A549 (cell line): ENCODE measurements at regions of chr1 and their contacts with region 1.

Region 1: GRCh38 chr1:178310685-178311105 is 186.1 kb downstream of the CLEC20A start:
- DNase-seq: peak; percentile 64 to 76
- ATAC-seq: peak; percentile 89 to 91
- H3K4me3 ChIP-seq: no peak overlapping the region
- H3K27ac ChIP-seq: no peak overlapping the region
- H3K4me1 ChIP-seq: 0 out of 3 replicates have a peak, but pooled peaks cover 7% of the 10 kb centered on the region
- CTCF ChIP-seq: peak; percentile 86
- EP300 ChIP-seq: no peak
- POLR2A ChIP-seq: no peak
- RAD21 ChIP-seq: peak; percentile 83 to 89

Region 2: DNA sequence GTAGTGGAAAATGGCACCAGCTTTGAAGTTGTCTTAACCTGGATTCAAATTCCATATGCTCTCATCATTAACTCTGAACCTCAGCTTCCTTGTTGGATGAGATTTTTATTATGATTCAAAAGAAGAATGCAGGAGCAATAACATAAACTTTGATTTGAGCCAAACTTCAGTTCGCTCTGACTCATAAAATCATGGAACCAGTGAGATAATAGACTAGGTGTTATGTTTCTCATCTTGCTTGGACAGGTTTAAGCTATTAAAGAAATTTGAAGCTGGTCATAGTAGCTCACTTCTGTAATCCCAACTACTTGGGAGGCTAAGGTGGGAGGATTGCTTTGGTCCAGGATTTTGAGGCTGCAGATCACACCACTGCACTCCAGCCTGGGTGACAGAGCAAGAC is 13.3 kb after region 1 on chr1:
- CTCF ChIA-PET with region 1: interaction called, 11 read pairs
- POLR2A ChIA-PET with region 1: no interaction called
- DNase-seq: no peak
- ATAC-seq: no peak
- H3K4me3 ChIP-seq: no peak overlapping the region
- H3K27ac ChIP-seq: no peak overlapping the region
- H3K4me1 ChIP-seq: peaks cover 7% of the 10 kb centered on the region; the same call in 2 of the 3 replicates
- CTCF ChIP-seq: no peak
- EP300 ChIP-seq: no peak
- POLR2A ChIP-seq: no peak
- RAD21 ChIP-seq: no peak

Region 3: GRCh38 chr1:178417858-178418257 is 107.2 kb after region 1 on chr1:
- CTCF ChIA-PET with region 1: no interaction called
- POLR2A ChIA-PET with region 1: no interaction called
- DNase-seq: peak; percentile 44 to 70
- ATAC-seq: peak; percentile 50 to 76; a peak in 5 of 6 replicates
- H3K4me3 ChIP-seq: no peak overlapping the region
- H3K27ac ChIP-seq: peak overlapping the region in 1 of 2 experiments; percentile 21; a peak in 2 of 6 replicates
- H3K4me1 ChIP-seq: peaks cover 15% of the 10 kb centered on the region
- CTCF ChIP-seq: no peak
- EP300 ChIP-seq: no peak
- POLR2A ChIP-seq: no peak
- RAD21 ChIP-seq: no peak

Region 4: DNA sequence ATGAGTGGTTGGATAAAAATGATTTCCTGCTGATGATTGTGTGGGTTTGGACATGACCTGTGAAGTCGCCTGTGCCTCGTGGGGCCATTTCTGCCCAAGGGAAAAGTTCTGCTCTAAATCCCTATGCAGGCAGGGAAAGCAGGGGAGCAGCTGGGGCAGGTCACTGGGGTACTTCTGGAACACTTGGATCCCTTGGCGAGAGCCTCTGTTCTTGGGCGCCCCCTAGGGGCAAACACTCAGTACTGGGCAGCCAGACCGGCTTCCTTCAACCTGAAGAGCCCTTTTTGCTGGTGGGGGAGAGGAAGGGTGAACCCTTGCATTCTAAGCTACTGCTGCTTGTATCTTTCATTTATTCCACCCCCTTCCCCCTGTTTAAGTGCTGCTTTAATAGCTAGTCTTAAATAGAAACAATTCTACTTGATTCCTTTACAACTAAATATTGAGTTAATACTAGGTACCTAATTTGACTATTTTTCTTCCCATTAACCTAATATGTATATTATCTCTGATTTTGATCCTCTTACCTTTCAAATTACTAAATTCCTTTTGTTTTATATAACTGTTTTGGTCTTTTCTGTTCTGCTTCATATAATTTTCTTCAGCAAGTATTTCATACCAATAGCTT is 191.1 kb after region 1 on chr1:
- CTCF ChIA-PET with region 1: interaction called, 36 read pairs
- POLR2A ChIA-PET with region 1: no interaction called
- DNase-seq: peak; percentile 62 to 80
- ATAC-seq: peak; percentile 76 to 92
- H3K4me3 ChIP-seq: no peak overlapping the region
- H3K27ac ChIP-seq: no peak overlapping the region
- H3K4me1 ChIP-seq: no peaks in the 10 kb centered on the region
- CTCF ChIP-seq: peak; percentile 84
- EP300 ChIP-seq: no peak
- POLR2A ChIP-seq: no peak
- RAD21 ChIP-seq: peak; percentile 72 to 80

Region 5: GRCh38 chr1:178532392-178532791 is 221.7 kb after region 1 on chr1:
- CTCF ChIA-PET with region 1: interaction called, 26 read pairs
- POLR2A ChIA-PET with region 1: no interaction called
- DNase-seq: peak; percentile 80 to 94
- ATAC-seq: peak; percentile 71 to 90
- H3K4me3 ChIP-seq: no peak overlapping the region
- H3K27ac ChIP-seq: peak overlapping the region; percentile 27 to 68; a peak in 4 of 6 replicates
- H3K4me1 ChIP-seq: peaks cover 29% of the 10 kb centered on the region
- CTCF ChIP-seq: peak; percentile 92
- EP300 ChIP-seq: no peak
- POLR2A ChIP-seq: no peak
- RAD21 ChIP-seq: peak; percentile 92 to 96